ENCODE measurements at regions of chr9 and their contacts with region 1.

Region 1: DNA sequence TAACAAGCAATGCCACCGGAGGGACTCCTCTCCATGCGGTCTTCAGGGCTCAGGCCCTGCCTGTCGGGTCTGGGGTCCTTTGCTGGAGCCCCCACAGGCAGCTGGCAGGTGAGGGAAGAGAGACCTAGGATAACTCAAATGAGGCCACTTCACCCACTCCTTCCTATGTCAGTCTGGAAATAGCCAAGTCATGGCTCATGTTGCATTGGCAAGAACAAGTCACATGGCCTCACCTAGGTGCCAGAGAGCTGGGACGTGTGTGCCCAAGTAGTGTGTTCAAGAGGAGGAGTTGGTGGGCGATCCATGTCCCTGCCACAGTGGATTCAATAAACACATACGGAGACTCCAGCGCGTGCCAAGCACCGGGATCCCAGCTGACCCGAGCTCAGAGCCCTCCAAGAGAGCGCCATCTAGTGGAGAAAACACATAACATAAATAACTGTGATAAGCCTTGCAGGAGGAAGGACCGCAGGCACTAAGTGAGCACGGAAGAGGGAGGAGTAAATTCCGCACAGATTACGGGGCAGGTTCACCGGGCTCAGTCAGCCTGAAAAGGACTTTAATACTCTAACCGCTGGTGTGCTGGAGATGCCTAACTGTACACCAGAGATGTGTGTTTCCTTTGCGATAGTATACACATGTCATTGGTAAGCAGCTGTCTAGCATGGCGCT is 580.8 kb downstream of the CCDC171 start:
- DNase-seq: peak in 1 of 2 experiments; percentile 71
- H3K4me3 ChIP-seq: no peak overlapping the region
- H3K27ac ChIP-seq: no peak overlapping the region
- H3K4me1 ChIP-seq: peaks cover 0 to 3% (median under 1%) of the 10 kb centered on the region in 4 experiments; a peak in 3 of 7 replicates
- H3K27me3 ChIP-seq: no peaks in the 10 kb centered on the region; a peak in 1 of 7 replicates
- CTCF ChIP-seq: peak; percentile 44 to 75 (median 72)
- EP300 ChIP-seq: no peak
- POLR2A ChIP-seq: no peak
- RAD21 ChIP-seq: peak; percentile 82 to 89

Region 2: DNA sequence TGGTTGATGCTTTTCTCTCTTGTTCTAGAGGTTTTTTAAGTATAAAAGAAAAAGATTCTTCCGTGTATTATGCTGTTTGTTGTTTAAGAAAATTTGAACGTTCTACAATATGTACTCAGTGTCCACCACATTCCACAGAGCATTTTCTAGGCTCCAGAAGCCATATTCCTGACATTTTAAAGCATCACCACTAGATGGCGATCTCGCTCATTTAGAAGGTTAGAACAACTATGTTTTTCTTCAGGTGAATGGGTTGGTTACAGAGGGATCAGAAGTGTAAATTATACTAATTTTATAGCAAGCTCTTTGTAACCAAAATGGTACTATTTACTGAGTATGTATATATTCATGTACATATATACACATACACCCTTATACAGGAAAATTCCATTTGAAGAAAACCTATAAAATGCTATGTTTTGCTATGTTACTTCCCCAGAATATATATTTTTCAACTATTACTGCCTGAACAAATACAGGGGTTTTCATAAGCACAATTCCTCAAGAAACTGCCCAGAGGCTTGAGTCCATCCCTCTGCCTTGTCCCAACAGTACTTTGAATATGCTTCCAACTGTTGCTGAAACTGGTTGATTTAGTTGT is 296.5 kb before region 1 on chr9:
- CTCF ChIA-PET with region 1: interaction called, 11 read pairs
- POLR2A ChIA-PET with region 1: no interaction called
- DNase-seq: no peak
- H3K4me3 ChIP-seq: no peak overlapping the region
- H3K27ac ChIP-seq: no peak overlapping the region
- H3K4me1 ChIP-seq: no peaks in the 10 kb centered on the region
- H3K27me3 ChIP-seq: no peaks in the 10 kb centered on the region
- CTCF ChIP-seq: peak in 2 of 3 experiments; percentile 50 to 73; a peak in 3 of 4 replicates
- EP300 ChIP-seq: no peak
- POLR2A ChIP-seq: no peak
- RAD21 ChIP-seq: peak; percentile 61 to 72

Region 3: GRCh38 chr9:15873569-15874177 is 260.0 kb before region 1 on chr9:
- CTCF ChIA-PET with region 1: interaction called, 55 read pairs
- POLR2A ChIA-PET with region 1: no interaction called
- DNase-seq: no peak
- H3K4me3 ChIP-seq: no peak overlapping the region
- H3K27ac ChIP-seq: no peak overlapping the region
- H3K4me1 ChIP-seq: no peaks in the 10 kb centered on the region
- H3K27me3 ChIP-seq: no peaks in the 10 kb centered on the region
- CTCF ChIP-seq: peak in 2 of 3 experiments; percentile 41 to 43; a peak in 2 of 4 replicates
- EP300 ChIP-seq: no peak
- POLR2A ChIP-seq: no peak
- RAD21 ChIP-seq: peak; percentile 67 to 73

Region 4: DNA sequence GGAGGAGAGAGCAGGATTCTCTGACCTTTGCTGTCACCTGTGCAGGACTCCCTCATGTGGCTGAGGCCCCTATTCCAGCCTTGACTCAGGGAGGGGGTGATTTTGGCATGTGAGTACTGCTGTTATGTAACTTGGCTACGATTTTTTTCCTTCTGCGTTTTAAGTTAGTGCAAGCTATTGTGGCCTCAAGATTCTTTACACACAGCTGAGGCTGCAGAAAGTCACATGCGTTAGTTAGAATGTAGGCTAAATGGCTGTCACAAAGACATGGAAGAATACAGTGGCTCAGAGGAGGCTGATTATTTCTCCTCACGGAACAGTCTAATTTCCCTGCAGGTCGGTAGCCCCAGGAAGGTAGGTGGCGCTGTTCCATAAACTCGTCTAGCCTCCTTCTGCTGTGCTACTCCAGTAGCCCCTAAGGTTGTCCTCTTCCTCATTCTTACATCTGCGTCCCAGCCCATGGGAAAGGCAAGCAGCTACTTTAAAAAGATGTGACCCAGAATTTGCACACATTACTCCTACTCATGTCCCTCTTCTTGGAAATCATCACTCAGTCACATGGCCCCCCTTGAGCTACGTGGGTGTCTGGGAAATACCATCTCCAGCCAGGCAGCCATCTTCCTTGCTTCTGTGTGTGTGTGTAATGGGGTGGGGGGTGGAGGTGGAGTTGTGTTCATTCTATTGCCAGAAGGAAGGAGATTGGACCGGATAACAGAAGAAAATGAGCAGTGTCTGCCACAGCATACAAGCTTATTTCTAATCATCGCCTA is 94.3 kb before region 1 on chr9:
- CTCF ChIA-PET with region 1: interaction called, 119 read pairs
- POLR2A ChIA-PET with region 1: no interaction called
- DNase-seq: peak; percentile 46 to 86
- H3K4me3 ChIP-seq: no peak overlapping the region; a peak in 1 of 8 replicates
- H3K27ac ChIP-seq: no peak overlapping the region
- H3K4me1 ChIP-seq: peaks cover 4 to 16% (median 11%) of the 10 kb centered on the region in 4 experiments; a peak in 6 of 7 replicates
- H3K27me3 ChIP-seq: no peaks in the 10 kb centered on the region
- CTCF ChIP-seq: peak; percentile 70 to 80 (median 79)
- EP300 ChIP-seq: no peak
- POLR2A ChIP-seq: no peak
- RAD21 ChIP-seq: peak; percentile 52 to 62

Region 5: DNA sequence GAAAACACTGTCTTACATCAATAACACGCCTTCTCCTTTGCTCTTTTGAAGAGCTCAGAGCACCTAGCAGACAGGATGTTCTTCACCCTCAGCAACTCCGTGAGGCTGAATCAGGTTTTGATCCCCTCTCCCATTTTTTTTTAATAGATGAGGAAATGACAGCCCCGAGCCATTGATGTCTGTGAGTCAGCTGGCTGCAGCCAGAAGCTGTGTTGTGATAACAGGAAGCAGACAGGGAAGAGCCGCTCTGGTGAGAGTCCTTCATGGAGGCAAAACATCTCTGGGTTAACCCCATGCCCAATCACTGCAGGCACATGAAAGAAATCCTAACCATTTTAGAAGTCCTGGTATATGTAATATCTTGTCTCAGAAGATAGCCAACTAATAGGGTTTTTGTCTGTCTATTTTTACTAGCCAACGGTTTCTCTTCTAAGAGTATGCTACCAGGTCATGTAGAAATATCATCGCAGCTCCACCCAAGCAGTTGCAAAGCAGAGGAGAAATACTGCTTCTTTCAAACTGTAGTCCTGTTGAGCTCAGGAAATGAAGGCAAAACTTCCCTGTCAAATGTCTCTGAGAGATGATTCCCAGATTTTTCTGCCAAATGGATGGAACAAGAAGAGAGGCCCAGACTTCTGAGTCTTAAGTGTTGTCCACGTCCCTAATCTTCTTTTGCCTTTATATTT is 11.9 kb before region 1 on chr9:
- CTCF ChIA-PET with region 1: interaction called, 27 read pairs
- POLR2A ChIA-PET with region 1: no interaction called
- DNase-seq: no peak
- H3K4me3 ChIP-seq: no peak overlapping the region
- H3K27ac ChIP-seq: no peak overlapping the region
- H3K4me1 ChIP-seq: peaks cover 0 to 2% (median 0%) of the 10 kb centered on the region in 4 experiments; a peak in 2 of 7 replicates
- H3K27me3 ChIP-seq: no peaks in the 10 kb centered on the region
- CTCF ChIP-seq: no peak
- EP300 ChIP-seq: no peak
- POLR2A ChIP-seq: no peak
- RAD21 ChIP-seq: no peak

Region 6: DNA sequence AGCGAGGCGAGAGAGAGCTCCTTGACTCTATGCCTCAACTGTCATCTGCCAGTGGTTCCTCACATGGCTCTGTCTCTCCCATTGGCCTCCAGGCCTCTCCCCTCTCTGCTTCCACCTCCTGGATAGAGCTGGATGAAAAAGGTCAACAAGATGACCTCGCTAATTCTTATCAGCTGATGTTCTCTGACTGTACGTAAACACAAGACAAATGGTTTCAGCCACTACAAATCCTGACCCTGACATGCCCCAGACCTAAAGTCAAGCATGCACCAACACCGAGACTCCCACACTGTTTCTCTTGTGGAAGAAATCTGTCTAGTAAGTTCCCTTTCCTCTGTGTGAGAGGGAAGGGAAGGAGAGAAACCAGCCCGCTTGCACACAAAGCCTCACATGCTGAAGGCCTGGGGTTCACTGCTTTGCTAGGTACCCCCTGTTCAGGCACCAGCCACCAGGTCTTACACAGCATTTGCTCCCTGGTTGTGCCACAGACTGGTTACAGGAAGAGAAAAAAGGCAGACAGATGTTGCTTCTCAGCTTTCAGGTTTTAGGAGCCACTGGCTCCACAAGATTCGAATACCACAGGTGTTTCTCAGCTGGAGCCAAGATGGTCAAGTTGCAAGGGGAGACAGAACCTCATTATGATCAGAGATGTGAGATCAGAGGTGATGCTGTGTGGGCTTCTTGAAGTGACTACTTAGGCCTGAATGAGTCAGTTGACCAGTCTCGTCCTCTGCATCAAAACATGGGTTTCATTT is 11.7 kb after region 1 on chr9:
- CTCF ChIA-PET with region 1: interaction called, 26 read pairs
- POLR2A ChIA-PET with region 1: no interaction called
- DNase-seq: no peak
- H3K4me3 ChIP-seq: no peak overlapping the region
- H3K27ac ChIP-seq: no peak overlapping the region
- H3K4me1 ChIP-seq: no peaks in the 10 kb centered on the region
- H3K27me3 ChIP-seq: no peaks in the 10 kb centered on the region
- CTCF ChIP-seq: no peak
- EP300 ChIP-seq: no peak
- POLR2A ChIP-seq: no peak
- RAD21 ChIP-seq: no peak

Region 7: DNA sequence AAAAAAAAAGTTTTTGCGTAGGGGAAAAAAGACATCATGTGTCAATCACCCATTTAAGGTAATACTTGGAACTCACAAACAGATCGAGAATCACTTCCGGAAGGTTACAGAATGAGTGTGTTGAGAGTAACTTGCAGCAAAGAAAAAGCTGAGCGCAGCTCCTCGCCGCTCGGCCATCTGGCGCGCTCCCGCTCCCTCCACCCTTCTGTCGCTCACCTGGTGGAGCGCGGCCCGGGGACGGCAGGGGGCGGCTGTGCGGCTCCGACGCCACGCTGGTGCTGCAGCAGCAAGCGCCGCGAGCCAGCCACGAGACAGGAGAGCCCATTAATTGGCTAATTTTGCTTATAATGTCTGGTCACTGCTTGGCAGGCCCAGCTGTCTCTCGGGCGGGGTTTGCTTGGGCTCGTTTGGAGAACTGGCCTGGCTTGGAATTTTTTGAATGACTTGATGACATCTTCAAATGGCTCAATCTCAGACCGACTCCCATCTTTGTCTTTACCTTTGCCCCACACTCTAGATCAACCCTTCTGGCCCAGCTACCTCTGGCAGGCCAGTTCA is 20.9 kb after region 1 on chr9:
- CTCF ChIA-PET with region 1: interaction called, 15 read pairs
- POLR2A ChIA-PET with region 1: interaction called, 3 read pairs
- DNase-seq: peak; percentile 36 to 82
- H3K4me3 ChIP-seq: peak overlapping the region in 3 of 4 experiments; percentile 18 to 50 (median 23); a peak in 6 of 8 replicates
- H3K27ac ChIP-seq: no peak overlapping the region
- H3K4me1 ChIP-seq: peaks cover 0 to 3% (median 1%) of the 10 kb centered on the region in 4 experiments; a peak in 5 of 7 replicates
- H3K27me3 ChIP-seq: peaks cover 0 to 16% (median 6%) of the 10 kb centered on the region in 4 experiments; a peak in 5 of 7 replicates
- CTCF ChIP-seq: peak; percentile 59 to 70 (median 60)
- EP300 ChIP-seq: no peak
- POLR2A ChIP-seq: no peak
- RAD21 ChIP-seq: peak; percentile 48 to 67